ENCODE measurements at regions of chr21 and their contacts with region 1.

Region 1: GRCh38 chr21:34073032-34073869 is at the starts of genes MRPS6 and SLC5A3:
- DNase-seq: peak; percentile 73 to 75
- ATAC-seq: peak; percentile 85
- H3K4me3 ChIP-seq: peak within 1 kb of the TSS; percentile 71 to 91 (median 74)
- H3K27ac ChIP-seq: peak within 1 kb of the TSS; percentile 87 to 93 (median 90)
- H3K4me1 ChIP-seq: peaks cover 40 to 41% of the 10 kb centered on the region in 2 donors
- H3K27me3 ChIP-seq: no peaks in the 10 kb centered on the region
- CTCF ChIP-seq: no peak
- POLR2A ChIP-seq: peak; percentile 93 to 94
- total RNA-seq, gene MRPS6: 17.3 to 54.8 (median 29.3) TPM
- total RNA-seq, gene SLC5A3: 2.0 to 22.2 (median 6.2) TPM

Region 2: GRCh38 chr21:33915368-33916199 is 157.7 kb before region 1 on chr21 and contains the start of gene ATP5PO:
- in situ Hi-C with region 1: loop called in 2 of 4 experiments (anchors 10 kb)
- intact Hi-C with region 1: loop called (anchors 2 kb)
- DNase-seq: peak; percentile 97 to 98
- ATAC-seq: peak; percentile 95 to 97
- H3K4me3 ChIP-seq: peak within 1 kb of the TSS; percentile 86 to 96 (median 90)
- H3K27ac ChIP-seq: peak within 1 kb of the TSS; percentile 88 to 93 (median 92)
- H3K4me1 ChIP-seq: peaks cover 17 to 26% of the 10 kb centered on the region in 2 donors
- H3K27me3 ChIP-seq: no peaks in the 10 kb centered on the region
- CTCF ChIP-seq: peak in 1 of 5 experiments; percentile 10
- POLR2A ChIP-seq: peak; percentile 82 to 86
- total RNA-seq, gene ATP5PO: 261 to 560 (median 356) TPM

Region 3: DNA sequence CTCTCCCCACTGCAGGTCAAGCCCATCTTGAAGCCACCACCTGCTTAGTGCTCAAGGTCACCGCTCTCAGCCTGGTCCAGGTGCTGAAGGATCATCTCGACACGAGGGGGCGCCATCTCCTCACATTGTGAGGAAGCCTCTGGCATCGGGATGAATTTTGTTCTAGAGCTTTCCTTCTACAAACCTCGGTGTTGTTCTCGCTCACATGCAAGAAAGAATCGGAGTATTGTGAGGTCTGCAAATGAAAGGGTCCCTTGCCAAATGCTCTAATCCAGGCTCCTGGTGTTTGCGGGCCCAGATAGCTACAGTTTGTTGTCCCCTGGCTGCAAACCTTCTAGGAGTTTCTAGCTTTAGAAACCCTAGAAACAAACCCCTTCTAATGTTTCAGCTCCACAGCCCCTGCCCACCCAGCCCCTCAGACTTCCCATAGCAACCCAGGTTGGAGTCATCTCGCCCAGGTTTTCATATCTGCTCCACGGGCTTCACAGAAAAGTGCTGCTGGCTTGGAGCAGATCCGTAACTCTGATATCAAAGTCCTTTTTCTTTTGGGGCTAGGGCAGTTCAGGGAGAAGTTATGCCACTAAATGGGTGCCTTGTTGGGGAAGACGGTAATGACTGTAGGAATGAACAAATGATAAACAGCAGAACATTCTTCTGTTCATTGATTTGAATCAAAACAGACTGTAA is 149.0 kb before region 1 on chr21:
- in situ Hi-C with region 1: loop called in 3 of 4 experiments (anchors 10 to 25 kb)
- intact Hi-C with region 1: no loop called
- DNase-seq: peak; percentile 64 to 78
- ATAC-seq: peak; percentile 96 to 99
- H3K4me3 ChIP-seq: peak overlapping the region in 1 of 4 donors; percentile 19
- H3K27ac ChIP-seq: no peak overlapping the region
- H3K4me1 ChIP-seq: peaks cover 5 to 8% of the 10 kb centered on the region in 2 donors
- H3K27me3 ChIP-seq: no peaks in the 10 kb centered on the region
- CTCF ChIP-seq: peak; percentile 85 to 95 (median 91)
- POLR2A ChIP-seq: no peak

Region 4: DNA sequence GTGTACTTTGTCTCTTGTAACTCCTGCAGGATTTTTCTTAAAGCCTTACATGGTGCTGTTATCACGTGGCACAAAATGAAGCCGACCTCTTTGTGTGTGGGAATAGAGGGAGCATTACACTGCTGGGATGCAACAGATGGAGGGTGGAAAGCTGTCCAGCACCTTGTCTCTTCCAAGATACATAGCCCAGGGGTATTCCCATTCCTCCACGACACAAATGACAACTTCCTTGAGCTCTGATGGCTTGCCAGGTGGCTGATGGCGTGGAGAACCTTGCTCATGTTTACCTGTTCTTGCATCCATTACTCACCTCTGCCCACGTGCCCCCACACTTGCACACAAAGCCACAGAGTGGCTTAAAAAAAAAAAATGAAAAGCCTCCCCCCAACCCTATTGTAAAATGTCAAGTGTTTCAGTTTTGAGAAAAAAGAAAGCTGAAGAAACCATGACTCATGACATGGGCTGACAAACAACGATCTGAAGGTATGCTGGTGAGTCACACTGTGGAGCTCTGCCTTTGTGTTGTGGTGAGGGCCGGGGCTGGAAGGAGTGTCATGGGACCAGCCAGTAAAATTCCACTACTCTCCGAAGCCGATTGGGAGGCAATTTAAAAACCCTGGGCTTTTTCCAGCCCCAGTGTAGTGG is 125.7 kb before region 1 on chr21:
- in situ Hi-C with region 1: loop called in 1 of 4 experiments (anchors 25 kb)
- intact Hi-C with region 1: loop called (anchors 10 kb)
- DNase-seq: peak; percentile 84
- ATAC-seq: peak; percentile 96 to 97
- H3K4me3 ChIP-seq: peak overlapping the region in 3 of 4 donors; percentile 27 to 37 (median 30)
- H3K27ac ChIP-seq: peak overlapping the region; percentile 32 to 81 (median 76)
- H3K4me1 ChIP-seq: peaks cover 16 to 34% of the 10 kb centered on the region in 2 donors
- H3K27me3 ChIP-seq: no peaks in the 10 kb centered on the region
- CTCF ChIP-seq: peak in 1 of 5 experiments; percentile 21
- POLR2A ChIP-seq: no peak

Region 5: GRCh38 chr21:34129039-34129891 is 56.0 kb after region 1 on chr21:
- in situ Hi-C with region 1: no loop called
- intact Hi-C with region 1: loop called (anchors 2 kb)
- DNase-seq: peak; percentile 74 to 81
- ATAC-seq: peak; percentile 78 to 81
- H3K4me3 ChIP-seq: peak overlapping the region; percentile 30 to 41 (median 38)
- H3K27ac ChIP-seq: peak overlapping the region; percentile 79 to 95 (median 88)
- H3K4me1 ChIP-seq: peaks cover 71 to 92% of the 10 kb centered on the region in 2 donors
- H3K27me3 ChIP-seq: no peaks in the 10 kb centered on the region
- CTCF ChIP-seq: peak in 3 of 5 experiments; percentile 19 to 53 (median 50)
- POLR2A ChIP-seq: peak in 1 of 2 donors; percentile 2

Region 6: DNA sequence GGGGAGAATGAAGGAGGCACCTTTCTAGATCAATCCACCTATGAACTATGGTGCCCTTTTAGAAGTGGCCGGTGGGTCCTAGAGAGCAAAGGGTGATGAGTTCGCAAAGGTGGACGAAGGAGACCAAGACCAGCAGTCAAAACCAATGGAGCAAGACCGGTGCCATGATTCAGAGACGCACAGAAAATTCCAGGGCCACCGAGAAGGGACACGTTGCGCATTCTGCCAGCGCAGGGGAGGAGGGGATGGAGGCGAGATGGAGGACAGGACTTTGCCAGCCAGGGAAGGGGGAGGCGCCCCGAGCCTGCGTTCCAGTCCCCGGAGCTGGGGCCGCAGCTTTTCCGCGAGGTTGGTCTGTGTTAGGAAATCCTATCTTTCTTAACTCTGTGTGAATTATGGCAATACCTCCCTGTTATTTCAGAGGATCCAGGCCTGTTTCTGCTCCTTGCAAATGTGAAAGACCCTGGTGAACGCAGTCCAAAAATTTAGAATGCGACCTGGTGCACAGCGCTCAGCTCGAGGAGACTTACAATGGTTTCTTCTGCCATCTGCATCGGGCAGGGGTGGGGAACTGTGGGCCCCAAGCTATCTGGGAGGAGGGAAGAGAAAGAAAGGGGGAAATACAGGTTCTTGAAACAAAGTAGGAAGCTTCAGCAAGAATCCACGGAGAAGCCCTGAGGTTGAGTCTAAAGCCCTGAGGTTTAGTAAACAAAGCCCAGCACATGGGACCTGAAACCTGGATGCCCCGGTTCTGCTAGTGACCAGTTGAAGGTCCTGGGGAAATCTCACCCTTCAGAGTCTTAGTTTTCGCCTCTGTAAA is 129.5 kb after region 1 on chr21:
- in situ Hi-C with region 1: loop called in 1 of 4 experiments (anchors 25 kb)
- intact Hi-C with region 1: loop called (anchors 2 kb)
- DNase-seq: peak in 1 of 2 donors; percentile 43
- ATAC-seq: peak; percentile 10 to 27
- H3K4me3 ChIP-seq: peak overlapping the region in 3 of 4 donors; percentile 60 to 65 (median 62)
- H3K27ac ChIP-seq: peak overlapping the region; percentile 43 to 84 (median 68)
- H3K4me1 ChIP-seq: peaks cover 30 to 43% of the 10 kb centered on the region in 2 donors
- H3K27me3 ChIP-seq: no peaks in the 10 kb centered on the region
- CTCF ChIP-seq: no peak
- POLR2A ChIP-seq: no peak

Region 7: DNA sequence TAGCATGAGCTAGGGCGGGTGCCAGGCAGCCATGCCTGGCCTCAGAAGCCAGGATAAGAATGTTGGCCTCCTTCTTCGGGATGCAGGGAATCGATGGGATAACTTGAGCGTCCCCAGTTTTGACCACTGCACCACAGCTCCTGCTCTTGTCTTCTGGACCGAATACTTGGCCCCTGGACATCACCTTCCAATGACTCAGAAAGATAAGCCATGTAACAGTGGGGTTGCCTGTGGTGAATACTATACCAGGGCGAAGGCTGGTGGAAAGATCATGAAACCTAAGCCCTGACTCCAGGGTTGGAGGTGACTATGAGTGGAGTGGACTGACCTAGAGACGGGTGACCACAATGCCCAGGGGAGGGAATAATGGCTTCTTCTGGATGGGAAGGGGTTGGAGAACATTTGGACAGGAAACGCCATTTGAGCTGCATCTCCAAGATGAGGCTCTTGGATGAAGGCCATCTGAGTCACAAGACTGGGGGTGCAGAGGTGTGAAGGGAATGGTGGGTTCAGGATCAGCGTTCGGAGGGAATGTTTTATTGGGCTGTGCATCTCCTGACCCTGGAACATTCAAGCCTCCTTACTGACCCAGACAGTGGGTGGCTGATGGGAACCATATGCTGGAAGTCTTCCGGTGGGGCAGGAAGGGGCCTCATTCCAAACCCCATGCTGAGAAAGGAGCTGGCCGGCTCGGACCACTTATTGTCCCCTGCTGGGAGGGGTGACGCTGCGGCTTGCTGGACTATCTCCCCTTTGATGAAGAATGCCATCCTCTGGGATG is 272.0 kb after region 1 on chr21:
- in situ Hi-C with region 1: no loop called
- intact Hi-C with region 1: loop called (anchors 5 kb)
- DNase-seq: no peak
- ATAC-seq: no peak
- H3K4me3 ChIP-seq: no peak overlapping the region
- H3K27ac ChIP-seq: peak overlapping the region; percentile 13 to 51 (median 40)
- H3K4me1 ChIP-seq: peaks cover 12 to 27% of the 10 kb centered on the region in 2 donors
- H3K27me3 ChIP-seq: no peaks in the 10 kb centered on the region
- CTCF ChIP-seq: no peak
- POLR2A ChIP-seq: no peak

Region 8: GRCh38 chr21:34362136-34362444 is 288.8 kb after region 1 on chr21:
- in situ Hi-C with region 1: no loop called
- intact Hi-C with region 1: no loop called
- DNase-seq: no peak
- ATAC-seq: peak; percentile 21 to 27
- H3K4me3 ChIP-seq: no peak overlapping the region
- H3K27ac ChIP-seq: no peak overlapping the region
- H3K4me1 ChIP-seq: peaks cover 0 to 7% of the 10 kb centered on the region in 2 donors
- H3K27me3 ChIP-seq: no peaks in the 10 kb centered on the region
- CTCF ChIP-seq: peak in 2 of 5 experiments; percentile 7 to 9
- POLR2A ChIP-seq: no peak

Region 9: DNA sequence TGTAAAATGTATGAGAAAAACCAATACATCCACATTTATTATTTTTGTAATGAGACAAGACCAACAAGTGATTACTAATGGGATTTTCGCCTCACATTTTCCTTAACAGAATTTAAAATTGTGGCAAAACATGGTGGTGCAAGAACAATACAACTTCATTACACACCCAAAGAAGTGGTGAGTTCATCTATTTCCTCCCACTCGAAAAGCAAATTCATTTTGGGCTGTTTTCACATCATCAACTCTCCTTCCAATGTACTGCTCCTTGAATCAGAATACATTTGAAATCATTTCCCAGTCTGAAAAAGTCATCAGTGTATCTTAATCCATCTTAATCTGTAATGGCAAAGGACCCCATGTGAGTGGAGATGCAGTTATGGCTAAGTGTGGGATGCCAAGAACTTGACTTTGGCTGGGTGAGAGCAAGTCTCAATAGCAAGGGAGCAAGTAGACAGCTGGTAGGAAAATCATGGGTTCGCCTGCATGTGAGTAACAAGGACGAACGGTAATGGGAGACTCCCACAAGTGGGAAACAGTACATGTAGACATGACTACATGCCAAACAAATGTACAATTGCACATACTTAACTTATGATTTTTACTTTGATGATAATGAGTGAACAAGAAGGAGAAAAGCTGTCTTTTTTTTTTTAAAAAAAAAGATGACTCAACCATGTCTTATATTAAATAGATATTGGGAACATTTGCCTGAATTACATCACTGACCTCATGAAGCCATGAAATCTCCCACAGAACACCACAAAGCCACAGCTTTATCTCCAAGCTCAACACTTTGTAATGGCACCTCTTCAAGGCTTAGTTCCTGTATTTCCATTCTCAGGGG is 929.9 kb after region 1 on chr21:
- in situ Hi-C with region 1: no loop called
- intact Hi-C with region 1: no loop called
- DNase-seq: no peak
- ATAC-seq: no peak
- H3K4me3 ChIP-seq: no peak overlapping the region
- H3K27ac ChIP-seq: no peak overlapping the region
- H3K4me1 ChIP-seq: peaks cover 8 to 13% of the 10 kb centered on the region in 2 donors
- H3K27me3 ChIP-seq: no peaks in the 10 kb centered on the region
- CTCF ChIP-seq: no peak
- POLR2A ChIP-seq: no peak